Spleen (tissue), 13 donors: ENCODE measurements at regions of chr11 and their contacts with region 1.

Region 1: GRCh38 chr11:111777094-111778046 is 11.2 kb upstream of the PPP2R1B start:
- DNase-seq: no peak
- H3K4me3 ChIP-seq: no peak overlapping the region
- H3K27ac ChIP-seq: peak overlapping the region in 4 of 8 donors; percentile 30 to 69 (median 34)
- H3K4me1 ChIP-seq: peaks cover 0 to 22% (median 12%) of the 10 kb centered on the region in 6 donors
- H3K27me3 ChIP-seq: no peaks in the 10 kb centered on the region
- CTCF ChIP-seq: peak; percentile 65 to 89 (median 82)
- POLR2A ChIP-seq: no peak

Region 2: GRCh38 chr11:111001986-111002611 is 775.3 kb before region 1 on chr11:
- intact Hi-C with region 1: no loop called
- DNase-seq: no peak
- H3K4me3 ChIP-seq: no peak overlapping the region
- H3K27ac ChIP-seq: no peak overlapping the region
- H3K4me1 ChIP-seq: peaks cover 0 to 11% (median 6%) of the 10 kb centered on the region in 6 donors
- H3K27me3 ChIP-seq: no peaks in the 10 kb centered on the region
- CTCF ChIP-seq: no peak
- POLR2A ChIP-seq: no peak

Region 3: GRCh38 chr11:111601979-111602864 is 175.1 kb before region 1 on chr11 and contains the start of gene SIK2:
- intact Hi-C with region 1: loop called (anchors 5 kb)
- DNase-seq: peak; percentile 97
- H3K4me3 ChIP-seq: peak within 1 kb of the TSS; percentile 76 to 92 (median 86)
- H3K27ac ChIP-seq: peak within 1 kb of the TSS; percentile 79 to 95 (median 92)
- H3K4me1 ChIP-seq: peaks cover 8 to 53% (median 31%) of the 10 kb centered on the region in 6 donors
- H3K27me3 ChIP-seq: no peaks in the 10 kb centered on the region
- CTCF ChIP-seq: peak; percentile 37 to 89 (median 79)
- POLR2A ChIP-seq: no peak
- total RNA-seq, gene SIK2: 11.9 to 23.8 (median 17.4) TPM